H1 (cell line): ENCODE measurements at regions of chr14 and their contacts with region 1.

Region 1: GRCh38 chr14:22319526-22320361 is 269.3 kb downstream of the DAD1 start:
- DNase-seq: no peak
- H3K4me3 ChIP-seq: no peak overlapping the region
- H3K27ac ChIP-seq: no peak overlapping the region
- H3K4me1 ChIP-seq: no peaks in the 10 kb centered on the region
- H3K27me3 ChIP-seq: no peaks in the 10 kb centered on the region
- CTCF ChIP-seq: peak in 2 of 3 experiments; percentile 59 to 66; a peak in 2 of 4 replicates
- EP300 ChIP-seq: no peak
- POLR2A ChIP-seq: no peak
- RAD21 ChIP-seq: peak; percentile 63 to 64

Region 2: GRCh38 chr14:22303589-22304195 is 16.1 kb before region 1 on chr14:
- CTCF ChIA-PET with region 1: interaction called, 20 read pairs
- POLR2A ChIA-PET with region 1: no interaction called
- DNase-seq: no peak
- H3K4me3 ChIP-seq: no peak overlapping the region
- H3K27ac ChIP-seq: no peak overlapping the region
- H3K4me1 ChIP-seq: no peaks in the 10 kb centered on the region
- H3K27me3 ChIP-seq: no peaks in the 10 kb centered on the region
- CTCF ChIP-seq: peak in 1 of 3 experiments; percentile 35; a peak in 2 of 4 replicates
- EP300 ChIP-seq: no peak
- POLR2A ChIP-seq: no peak
- RAD21 ChIP-seq: peak; percentile 40 to 47

Region 3: GRCh38 chr14:22333422-22334276 is 13.9 kb after region 1 on chr14:
- CTCF ChIA-PET with region 1: interaction called, 62 read pairs
- POLR2A ChIA-PET with region 1: no interaction called
- DNase-seq: no peak
- H3K4me3 ChIP-seq: no peak overlapping the region
- H3K27ac ChIP-seq: no peak overlapping the region
- H3K4me1 ChIP-seq: peaks cover 0 to 9% (median 8%) of the 10 kb centered on the region in 4 experiments; a peak in 5 of 7 replicates
- H3K27me3 ChIP-seq: no peaks in the 10 kb centered on the region
- CTCF ChIP-seq: no peak
- EP300 ChIP-seq: no peak
- POLR2A ChIP-seq: no peak
- RAD21 ChIP-seq: no peak

Region 4: DNA sequence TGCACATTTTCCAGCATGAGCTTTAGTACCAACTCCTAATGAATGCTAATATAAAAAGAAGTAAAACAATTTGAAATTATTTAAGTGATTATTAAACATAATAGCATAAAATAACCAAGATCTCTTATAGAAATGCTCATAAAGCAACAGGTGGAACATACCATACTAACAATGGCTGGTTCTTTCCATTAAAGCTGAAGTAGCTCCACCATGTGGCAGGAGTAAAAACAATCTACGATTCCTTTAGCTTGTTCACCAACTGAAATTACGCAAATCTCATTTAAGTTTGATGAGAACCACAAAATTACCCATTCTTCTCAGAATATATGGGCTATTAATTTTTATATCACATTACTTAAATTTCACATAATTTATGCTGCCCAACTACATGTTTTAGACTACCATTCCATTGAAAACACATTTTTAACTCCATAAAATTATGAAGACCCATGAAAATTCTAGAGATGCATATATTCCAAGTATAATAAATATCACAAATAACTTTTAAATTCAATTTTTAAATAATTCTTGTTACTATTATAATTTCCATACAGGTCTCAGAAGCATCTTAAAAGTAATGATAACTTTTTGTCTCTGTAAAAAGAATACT is 55.7 kb after region 1 on chr14:
- CTCF ChIA-PET with region 1: interaction called, 83 read pairs
- POLR2A ChIA-PET with region 1: no interaction called
- DNase-seq: no peak
- H3K4me3 ChIP-seq: no peak overlapping the region
- H3K27ac ChIP-seq: no peak overlapping the region
- H3K4me1 ChIP-seq: no peaks in the 10 kb centered on the region
- H3K27me3 ChIP-seq: no peaks in the 10 kb centered on the region
- CTCF ChIP-seq: peak in 2 of 3 experiments; percentile 51 to 55; a peak in 2 of 4 replicates
- EP300 ChIP-seq: no peak
- POLR2A ChIP-seq: no peak
- RAD21 ChIP-seq: peak; percentile 68 to 74

Region 5: DNA sequence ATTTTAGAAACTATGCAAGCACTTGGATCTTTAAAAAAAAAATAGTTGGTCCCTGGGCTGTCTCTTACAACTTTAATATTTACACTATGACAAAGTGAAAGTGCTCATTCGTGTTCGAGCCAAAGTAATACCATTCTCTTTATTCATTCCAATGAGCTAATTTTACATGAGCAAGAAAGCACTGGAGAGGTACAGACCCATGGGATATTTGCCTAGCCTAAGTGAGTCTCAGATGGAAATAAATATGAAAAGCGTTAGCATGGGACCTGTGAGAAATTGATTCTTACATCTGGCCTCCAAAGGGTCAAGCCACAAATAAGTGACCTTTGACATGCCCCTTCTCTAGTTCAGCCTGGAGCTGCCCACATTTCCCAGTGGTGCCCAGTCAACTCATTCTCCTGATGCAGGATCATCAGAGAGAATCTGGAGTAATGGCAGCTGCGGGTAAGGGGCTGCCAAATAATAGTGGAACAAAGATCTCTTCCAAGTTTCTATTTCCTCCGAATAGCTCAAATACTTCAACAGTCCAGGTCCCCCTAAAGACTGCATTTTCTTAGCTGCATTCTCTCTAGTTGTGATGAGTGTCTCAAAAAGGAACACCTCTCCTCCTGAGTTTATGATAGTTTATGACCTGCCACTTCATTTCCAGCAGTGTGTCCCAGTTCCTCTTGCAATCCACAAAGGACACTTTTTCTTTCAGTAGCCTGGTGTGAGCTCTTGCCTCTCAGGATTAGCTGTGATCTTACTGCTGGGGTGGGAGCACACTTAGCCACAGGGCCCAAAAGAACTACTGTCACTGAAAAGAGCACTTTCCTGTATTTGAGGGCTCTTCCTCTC is 61.0 kb after region 1 on chr14:
- CTCF ChIA-PET with region 1: interaction called, 83 read pairs
- POLR2A ChIA-PET with region 1: no interaction called
- DNase-seq: no peak
- H3K4me3 ChIP-seq: no peak overlapping the region
- H3K27ac ChIP-seq: no peak overlapping the region
- H3K4me1 ChIP-seq: no peaks in the 10 kb centered on the region
- H3K27me3 ChIP-seq: no peaks in the 10 kb centered on the region
- CTCF ChIP-seq: no peak
- EP300 ChIP-seq: no peak
- POLR2A ChIP-seq: no peak
- RAD21 ChIP-seq: no peak

Region 6: DNA sequence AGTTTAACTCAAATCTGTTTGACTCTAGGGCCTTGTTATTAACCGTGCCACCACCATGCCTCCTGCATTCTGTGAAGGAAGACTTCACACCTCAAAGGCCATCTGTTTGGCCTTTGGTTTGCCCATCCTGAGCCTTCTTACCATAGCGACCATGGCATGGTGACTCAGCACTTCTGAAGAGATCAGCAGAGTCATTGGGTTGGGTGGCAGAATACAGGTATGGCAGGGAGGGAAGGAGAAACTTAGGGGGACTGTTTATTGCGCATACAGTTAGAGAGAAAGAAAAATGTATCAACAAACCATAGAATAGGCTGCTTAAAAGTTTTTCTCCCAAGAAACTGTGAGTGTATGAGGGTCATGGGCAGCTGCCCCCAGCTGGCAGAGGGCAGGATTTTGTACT is 220.1 kb after region 1 on chr14:
- CTCF ChIA-PET with region 1: no interaction called
- POLR2A ChIA-PET with region 1: no interaction called
- DNase-seq: no peak
- H3K4me3 ChIP-seq: no peak overlapping the region
- H3K27ac ChIP-seq: no peak overlapping the region
- H3K4me1 ChIP-seq: no peaks in the 10 kb centered on the region
- H3K27me3 ChIP-seq: no peaks in the 10 kb centered on the region
- CTCF ChIP-seq: no peak
- EP300 ChIP-seq: no peak
- POLR2A ChIP-seq: no peak
- RAD21 ChIP-seq: no peak